ENCODE measurements at regions of chr13 and their contacts with region 1.

Region 1: GRCh38 chr13:101474419-101474957 is 22.0 kb downstream of the ITGBL1 start:
- DNase-seq: no peak
- ATAC-seq: no peak
- H3K4me3 ChIP-seq: no peak overlapping the region
- H3K27ac ChIP-seq: no peak overlapping the region
- H3K4me1 ChIP-seq: no peaks in the 10 kb centered on the region
- H3K27me3 ChIP-seq: no peaks in the 10 kb centered on the region
- CTCF ChIP-seq: no peak
- POLR2A ChIP-seq: no peak

Region 2: GRCh38 chr13:101092985-101093384 is 381.5 kb before region 1 on chr13:
- in situ Hi-C with region 1: no loop called
- intact Hi-C with region 1: no loop called
- DNase-seq: no peak
- ATAC-seq: no peak
- H3K4me3 ChIP-seq: no peak overlapping the region
- H3K27ac ChIP-seq: no peak overlapping the region
- H3K4me1 ChIP-seq: no peaks in the 10 kb centered on the region
- H3K27me3 ChIP-seq: no peaks in the 10 kb centered on the region
- CTCF ChIP-seq: no peak
- POLR2A ChIP-seq: no peak

Region 3: DNA sequence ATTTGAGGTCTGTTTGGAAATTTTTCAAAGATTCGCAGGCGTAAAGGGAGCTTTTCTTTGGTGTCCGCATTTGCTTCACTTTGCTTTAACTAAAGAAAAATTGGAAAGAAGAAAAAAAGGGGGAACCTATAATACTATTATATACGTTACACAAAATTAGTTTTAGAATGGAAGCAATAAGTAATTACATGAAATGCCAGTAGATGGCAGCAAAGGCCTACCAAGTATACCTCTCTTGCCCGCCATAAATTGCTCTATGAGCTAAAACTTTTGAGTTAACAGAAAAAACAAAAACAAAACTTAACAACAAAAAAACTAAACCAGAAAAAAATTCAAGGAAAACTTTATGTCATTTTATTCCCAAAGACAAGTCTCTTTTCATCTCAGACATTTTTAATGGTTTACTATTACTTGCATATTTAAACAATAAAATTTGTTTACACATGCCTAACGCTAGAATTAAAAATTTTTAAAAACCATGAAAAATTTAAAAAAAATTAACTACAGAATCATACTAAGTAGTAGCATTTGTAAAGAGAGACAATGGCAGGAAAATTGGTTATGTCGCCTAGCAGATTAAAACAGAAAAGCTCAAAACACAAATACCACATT is 329.6 kb before region 1 on chr13:
- in situ Hi-C with region 1: no loop called
- intact Hi-C with region 1: loop called (anchors 10 kb)
- DNase-seq: no peak
- ATAC-seq: no peak
- H3K4me3 ChIP-seq: no peak overlapping the region
- H3K27ac ChIP-seq: no peak overlapping the region
- H3K4me1 ChIP-seq: no peaks in the 10 kb centered on the region
- H3K27me3 ChIP-seq: peaks cover 0 to 2% (median 0%) of the 10 kb centered on the region in 3 donors
- CTCF ChIP-seq: peak in 4 of 5 experiments; percentile 37 to 66 (median 56)
- POLR2A ChIP-seq: no peak

Region 4: GRCh38 chr13:101594936-101595335 is 120.4 kb after region 1 on chr13:
- in situ Hi-C with region 1: no loop called
- intact Hi-C with region 1: no loop called
- DNase-seq: no peak
- ATAC-seq: no peak
- H3K4me3 ChIP-seq: no peak overlapping the region
- H3K27ac ChIP-seq: no peak overlapping the region
- H3K4me1 ChIP-seq: no peaks in the 10 kb centered on the region
- H3K27me3 ChIP-seq: no peaks in the 10 kb centered on the region
- CTCF ChIP-seq: no peak
- POLR2A ChIP-seq: no peak